IMR-90 (cell line): ENCODE measurements at regions of chr11 and their contacts with region 1.

Region 1: DNA sequence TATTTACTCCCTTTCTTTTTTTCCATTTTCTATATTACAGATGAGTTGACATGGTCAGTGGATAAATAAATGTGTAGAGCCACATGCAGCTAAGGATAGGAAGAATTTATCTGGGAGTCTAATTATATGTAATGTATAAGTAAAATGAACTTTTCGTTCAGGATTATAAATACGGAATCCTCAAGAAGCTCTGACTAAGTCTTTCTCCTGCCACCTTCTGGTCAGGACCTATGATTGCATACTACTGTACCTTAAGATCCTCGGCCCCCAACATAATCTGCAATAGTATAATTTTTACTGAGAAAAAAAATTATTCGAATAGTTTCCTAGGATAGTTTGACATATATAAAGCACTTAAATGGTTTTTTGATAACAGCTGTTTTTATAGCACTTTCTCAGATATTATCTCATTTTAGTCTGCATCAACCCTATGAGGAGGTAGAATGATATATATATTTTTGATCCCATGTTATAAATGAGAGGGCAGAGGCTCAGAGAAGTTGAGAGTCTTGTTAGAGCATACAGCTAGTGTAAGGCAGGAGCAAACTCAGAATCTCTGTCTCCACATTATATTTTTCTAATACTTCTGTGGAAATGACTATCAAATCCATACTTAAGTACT is 36.1 kb downstream of the CCDC90B start:
- DNase-seq: peak; percentile 69
- ATAC-seq: peak; percentile 92
- H3K4me3 ChIP-seq: no peak overlapping the region
- H3K27ac ChIP-seq: no peak overlapping the region
- H3K4me1 ChIP-seq: 0 out of 2 replicates have a peak, but pooled peaks cover 2% of the 10 kb centered on the region
- H3K27me3 ChIP-seq: no peaks in the 10 kb centered on the region
- CTCF ChIP-seq: peak; percentile 64
- POLR2A ChIP-seq: no peak
- RAD21 ChIP-seq: peak; percentile 60

Region 2: GRCh38 chr11:82718307-82718706 is 531.8 kb before region 1 on chr11:
- CTCF ChIA-PET with region 1: interaction called, 4 read pairs
- POLR2A ChIA-PET with region 1: no interaction called
- dilution Hi-C with region 1: no loop called
- in situ Hi-C with region 1: no loop called
- intact Hi-C with region 1: loop called (anchors 1 kb)
- DNase-seq: peak; percentile 49
- ATAC-seq: peak; percentile 93
- H3K4me3 ChIP-seq: no peak overlapping the region
- H3K27ac ChIP-seq: no peak overlapping the region
- H3K4me1 ChIP-seq: no peaks in the 10 kb centered on the region
- H3K27me3 ChIP-seq: peaks cover 9% of the 10 kb centered on the region
- CTCF ChIP-seq: peak; percentile 72
- POLR2A ChIP-seq: no peak
- RAD21 ChIP-seq: peak; percentile 69

Region 3: DNA sequence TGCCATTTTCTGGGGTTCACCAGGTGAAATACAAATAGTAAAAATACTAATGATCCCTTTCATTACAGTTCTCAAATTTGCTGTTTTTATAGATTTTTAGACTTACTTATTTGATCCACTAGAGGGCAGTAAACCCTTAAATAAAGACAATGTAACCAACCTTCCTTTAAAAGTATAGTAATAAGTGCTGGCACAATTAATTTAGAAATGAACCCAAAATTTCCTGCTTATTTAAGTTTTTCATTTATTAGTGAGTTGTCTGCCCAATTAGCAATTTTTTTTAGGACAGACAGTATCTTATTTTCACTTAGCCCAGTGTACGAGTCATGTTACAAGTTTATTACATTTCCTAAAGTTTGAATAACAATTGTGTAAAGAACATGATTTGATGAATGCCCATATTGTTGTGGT is 343.8 kb before region 1 on chr11:
- CTCF ChIA-PET with region 1: interaction called, 3 read pairs
- POLR2A ChIA-PET with region 1: no interaction called
- dilution Hi-C with region 1: no loop called
- in situ Hi-C with region 1: loop called (anchors 5 kb)
- intact Hi-C with region 1: loop called (anchors 1 kb)
- DNase-seq: peak; percentile 43
- ATAC-seq: no peak
- H3K4me3 ChIP-seq: no peak overlapping the region
- H3K27ac ChIP-seq: no peak overlapping the region
- H3K4me1 ChIP-seq: no peaks in the 10 kb centered on the region
- H3K27me3 ChIP-seq: no peaks in the 10 kb centered on the region
- CTCF ChIP-seq: peak; percentile 59
- POLR2A ChIP-seq: no peak
- RAD21 ChIP-seq: peak; percentile 68

Region 4: GRCh38 chr11:83205608-83206185 is 44.4 kb before region 1 on chr11:
- CTCF ChIA-PET with region 1: no interaction called
- POLR2A ChIA-PET with region 1: no interaction called
- dilution Hi-C with region 1: no loop called
- in situ Hi-C with region 1: no loop called
- intact Hi-C with region 1: loop called (anchors 5 kb)
- DNase-seq: no peak
- ATAC-seq: no peak
- H3K4me3 ChIP-seq: no peak overlapping the region
- H3K27ac ChIP-seq: no peak overlapping the region
- H3K4me1 ChIP-seq: no peaks in the 10 kb centered on the region
- H3K27me3 ChIP-seq: no peaks in the 10 kb centered on the region
- CTCF ChIP-seq: no peak
- POLR2A ChIP-seq: no peak
- RAD21 ChIP-seq: no peak